ENCODE measurements at regions of chr10 and their contacts with region 1.

Region 1: GRCh38 chr10:110210674-110211464 is 3.5 kb downstream of the MXI1 start:
- DNase-seq: peak; percentile 92
- H3K4me3 Mint-ChIP-seq: peak overlapping the region; percentile 96
- H3K27ac Mint-ChIP-seq: peak overlapping the region; percentile 95
- H3K4me1 Mint-ChIP-seq: peaks cover 70% of the 10 kb centered on the region
- H3K27me3 Mint-ChIP-seq: peaks cover 10% of the 10 kb centered on the region

Region 2: DNA sequence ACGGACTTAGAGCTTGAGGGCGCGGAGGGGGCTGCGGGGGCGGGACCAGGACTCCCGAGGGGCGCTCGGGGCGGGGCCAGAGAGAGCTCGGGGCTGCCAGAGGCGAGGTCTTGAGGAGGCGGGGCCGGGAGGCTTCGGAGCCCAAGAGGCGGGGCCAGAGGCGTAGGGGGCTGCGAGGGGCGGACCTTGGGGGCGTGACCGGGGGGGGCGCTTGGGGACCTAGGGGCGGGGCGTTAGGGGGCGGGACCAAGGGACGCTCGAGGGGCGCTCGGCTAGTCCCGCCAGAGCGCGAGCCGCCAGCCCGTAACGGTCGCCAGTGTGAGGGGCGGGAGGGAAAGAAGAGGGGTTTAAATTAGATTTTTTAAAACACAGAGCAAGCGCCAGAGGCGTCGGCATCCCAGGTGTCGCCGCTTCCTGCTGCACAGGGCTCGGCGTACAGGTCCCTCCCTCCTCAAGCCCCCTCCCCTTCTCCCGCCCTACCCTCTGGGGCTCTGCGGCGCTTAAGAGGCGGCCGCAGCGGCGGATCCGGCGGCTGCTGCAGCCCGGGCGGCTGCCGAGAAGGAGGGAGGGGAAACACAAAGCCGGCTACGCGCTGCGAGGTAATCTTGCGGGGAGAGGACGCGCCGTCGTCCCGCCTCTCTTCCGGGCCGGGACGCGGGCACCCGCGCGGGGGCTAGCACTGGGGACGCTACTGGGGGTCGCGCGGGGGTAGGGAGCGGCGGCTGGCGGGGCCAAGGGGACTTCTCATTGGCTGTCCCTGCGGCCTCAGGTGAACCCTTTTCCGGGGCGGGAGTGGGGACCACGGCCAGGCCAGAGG is 203.0 kb before region 1 on chr10 and contains the start of gene ADD3:
- intact Hi-C with region 1: loop called (anchors 1 kb)
- DNase-seq: peak; percentile 81
- H3K4me3 Mint-ChIP-seq: peak within 1 kb of the TSS; percentile 93
- H3K27ac Mint-ChIP-seq: peak within 1 kb of the TSS; percentile 81
- H3K4me1 Mint-ChIP-seq: peaks cover 47% of the 10 kb centered on the region
- H3K27me3 Mint-ChIP-seq: peaks cover 2% of the 10 kb centered on the region
- total RNA-seq, gene ADD3: 30.1 and 36.6 TPM in 2 replicates

Region 3: DNA sequence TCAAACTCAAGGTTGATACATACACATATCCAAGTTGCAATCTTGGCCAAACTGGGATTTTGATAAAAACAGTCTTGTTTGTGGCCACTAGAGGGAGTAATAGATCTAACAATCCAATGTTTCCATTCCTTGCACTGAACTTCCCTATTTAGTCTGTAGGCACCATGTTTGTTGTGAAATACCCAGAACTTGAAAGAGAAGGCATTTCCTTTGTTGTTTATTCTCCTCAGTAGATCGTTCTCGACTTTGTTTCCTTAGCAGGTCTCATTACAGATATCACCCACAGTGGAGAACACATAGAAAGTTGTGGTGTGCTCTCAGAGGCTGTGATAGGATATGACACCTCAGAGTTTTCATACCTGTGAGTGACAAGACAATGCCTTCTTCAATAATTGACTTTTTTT is 73.7 kb before region 1 on chr10:
- intact Hi-C with region 1: loop called (anchors 1 kb)
- DNase-seq: no peak
- H3K4me3 Mint-ChIP-seq: no peak overlapping the region
- H3K27ac Mint-ChIP-seq: peak overlapping the region; percentile 1
- H3K4me1 Mint-ChIP-seq: peaks cover 33% of the 10 kb centered on the region
- H3K27me3 Mint-ChIP-seq: no peaks in the 10 kb centered on the region

Region 4: GRCh38 chr10:110252151-110252550 is 41.3 kb after region 1 on chr10:
- intact Hi-C with region 1: loop called (anchors 1 kb)
- DNase-seq: no peak
- H3K4me3 Mint-ChIP-seq: no peak overlapping the region
- H3K27ac Mint-ChIP-seq: no peak overlapping the region
- H3K4me1 Mint-ChIP-seq: peaks cover 47% of the 10 kb centered on the region
- H3K27me3 Mint-ChIP-seq: peaks cover 24% of the 10 kb centered on the region

Region 5: DNA sequence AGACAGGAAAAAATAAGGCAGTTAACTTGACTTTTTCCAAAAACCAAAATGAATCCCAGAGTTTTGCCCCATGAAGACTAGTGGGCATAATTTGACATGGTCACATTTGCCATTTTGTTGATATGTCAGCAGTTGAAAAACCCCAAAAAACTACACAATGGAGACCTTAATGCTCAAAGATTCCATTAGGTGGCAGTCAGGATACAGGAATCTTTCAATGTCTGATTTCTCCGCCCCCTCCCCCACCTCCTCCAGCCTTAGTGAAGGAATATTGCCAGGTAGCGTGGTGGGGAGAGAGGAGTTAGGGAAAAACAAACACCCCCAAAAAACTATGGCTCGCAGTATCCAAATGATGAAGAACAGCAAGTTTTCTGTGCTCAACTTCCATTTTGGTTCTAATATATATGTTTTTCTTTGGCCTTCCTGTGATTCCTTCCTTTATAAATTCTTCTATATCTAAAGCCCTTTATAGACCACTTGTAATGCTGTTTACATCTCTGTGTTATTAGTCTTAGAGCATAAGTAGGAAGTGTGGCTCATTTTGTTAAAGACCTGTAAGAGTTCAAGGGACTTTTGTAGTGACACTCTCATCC is 100.6 kb after region 1 on chr10:
- intact Hi-C with region 1: no loop called
- DNase-seq: no peak
- H3K4me3 Mint-ChIP-seq: no peak overlapping the region
- H3K27ac Mint-ChIP-seq: no peak overlapping the region
- H3K4me1 Mint-ChIP-seq: peaks cover 51% of the 10 kb centered on the region
- H3K27me3 Mint-ChIP-seq: no peaks in the 10 kb centered on the region

Region 6: DNA sequence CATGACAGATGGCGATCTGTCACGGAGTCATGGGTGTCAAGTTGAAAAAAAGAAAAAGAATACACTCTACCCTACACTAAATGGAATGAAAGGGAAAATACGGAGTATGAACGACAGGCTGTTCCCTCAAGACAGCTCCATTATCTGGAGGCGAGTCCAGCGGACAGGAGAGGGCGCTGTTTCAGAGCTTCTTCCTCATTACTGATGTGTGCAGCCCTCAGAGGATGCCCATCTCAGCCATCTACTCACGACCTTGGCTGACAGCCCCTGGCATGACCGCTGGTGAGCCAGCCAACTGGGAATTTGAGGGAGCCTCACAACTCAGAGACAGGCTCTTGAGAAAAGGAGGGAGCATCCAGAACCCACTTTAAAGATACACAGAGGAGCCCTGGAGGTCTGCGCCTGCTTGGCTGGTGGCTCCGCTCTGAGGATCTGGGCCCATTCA is 143.5 kb after region 1 on chr10:
- intact Hi-C with region 1: loop called (anchors 1 kb)
- DNase-seq: peak; percentile 72
- H3K4me3 Mint-ChIP-seq: peak overlapping the region; percentile 82
- H3K27ac Mint-ChIP-seq: peak overlapping the region; percentile 97
- H3K4me1 Mint-ChIP-seq: peaks cover 82% of the 10 kb centered on the region
- H3K27me3 Mint-ChIP-seq: no peaks in the 10 kb centered on the region

Region 7: DNA sequence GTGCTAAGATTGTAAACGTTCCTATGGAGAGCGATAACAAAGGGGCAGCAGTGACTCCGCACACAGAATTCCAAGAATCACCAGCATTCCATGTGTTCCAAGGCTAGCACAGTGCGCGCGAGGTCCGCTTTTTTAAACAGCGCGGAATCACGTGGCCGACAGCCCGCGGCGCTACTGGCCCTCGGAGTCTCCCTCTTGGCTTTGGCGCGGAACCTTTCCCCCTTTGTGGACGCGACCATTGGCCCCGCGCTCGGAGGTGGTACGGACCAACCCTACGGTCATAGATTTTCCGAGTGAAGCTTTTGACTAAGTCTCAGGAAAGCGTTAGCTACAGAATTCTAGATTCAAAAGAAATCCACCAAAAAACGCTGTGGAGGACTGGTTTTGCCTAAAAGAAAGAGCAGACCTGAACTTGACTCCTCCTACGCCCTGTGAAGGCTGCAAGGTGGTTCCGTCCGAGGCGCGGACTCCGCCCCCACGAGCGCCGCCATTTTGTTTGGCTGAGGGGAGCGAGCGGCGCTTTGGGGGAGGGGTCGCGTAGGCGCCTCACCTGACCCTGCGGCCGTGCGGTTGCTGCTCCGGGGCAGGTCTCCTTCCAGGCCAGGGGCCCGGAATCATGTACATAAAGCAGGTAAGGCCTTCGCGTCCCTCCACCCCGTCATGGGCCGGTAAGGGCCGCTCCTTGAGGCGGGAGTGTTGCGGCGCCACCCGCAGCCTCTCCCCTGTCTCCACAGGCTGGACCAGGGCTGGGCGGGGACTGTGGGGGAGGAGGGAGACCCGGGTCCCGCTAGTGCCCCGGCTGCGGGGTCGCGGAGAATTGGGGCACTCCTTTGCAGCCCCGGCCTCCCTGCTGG is 356.6 kb after region 1 on chr10 and contains the start of gene SMC3:
- intact Hi-C with region 1: loop called (anchors 2 kb)
- DNase-seq: peak; percentile 89
- H3K4me3 Mint-ChIP-seq: peak within 1 kb of the TSS; percentile 93
- H3K27ac Mint-ChIP-seq: peak within 1 kb of the TSS; percentile 96
- H3K4me1 Mint-ChIP-seq: peaks cover 44% of the 10 kb centered on the region
- H3K27me3 Mint-ChIP-seq: peaks cover 14% of the 10 kb centered on the region
- total RNA-seq, gene SMC3: 74.5 and 77.9 TPM in 2 replicates

Measured in activated T-helper 1 cell treated with anti-CD3 and anti-CD28 coated beads, Interleukin-12 subunit alpha, Interleukin-12 subunit beta, Interleukin-2, Interleukin-4 antibody, amounts not matched to agents 30 ng/mL and 10 ng/mL and 1 ng/mL, durations not matched to agents 14 hours and 24 hours and 36 hours (primary cell).